ENCODE measurements at regions of chr5 and their contacts with region 1.

Region 1: GRCh38 chr5:472656-473553 is 29.9 kb downstream of the EXOC3 start:
- DNase-seq: peak; percentile 70
- H3K4me3 Mint-ChIP-seq: peak overlapping the region; percentile 79
- H3K27ac Mint-ChIP-seq: no peak overlapping the region
- H3K4me1 Mint-ChIP-seq: peaks cover 12% of the 10 kb centered on the region
- H3K27me3 Mint-ChIP-seq: peaks cover 13% of the 10 kb centered on the region
- CTCF ChIP-seq: no peak

Region 2: DNA sequence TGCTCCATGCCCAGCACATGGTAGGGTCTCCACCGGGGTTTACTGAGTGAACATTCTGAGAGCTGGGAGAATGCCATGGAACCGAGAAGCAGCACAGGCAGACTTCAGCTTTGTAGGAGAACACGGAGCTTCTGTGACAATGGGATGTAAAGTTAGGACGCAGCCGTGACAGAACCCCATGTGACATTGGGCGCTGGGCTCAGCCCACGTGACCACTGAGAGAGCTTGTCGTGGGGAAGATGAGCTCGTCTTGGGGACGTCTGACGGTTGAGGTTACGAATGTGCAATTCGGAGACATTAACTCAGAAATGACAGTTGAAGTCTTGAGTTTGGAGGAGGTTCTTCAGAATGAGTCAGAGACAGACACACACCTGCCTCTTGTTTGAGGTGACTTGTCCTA is 241.2 kb before region 1 on chr5:
- CTCF ChIA-PET with region 1: no interaction called
- POLR2A ChIA-PET with region 1: no interaction called
- intact Hi-C with region 1: no loop called
- DNase-seq: no peak
- H3K4me3 Mint-ChIP-seq: no peak overlapping the region
- H3K27ac Mint-ChIP-seq: no peak overlapping the region
- H3K4me1 Mint-ChIP-seq: no peaks in the 10 kb centered on the region
- H3K27me3 Mint-ChIP-seq: no peaks in the 10 kb centered on the region
- CTCF ChIP-seq: no peak

Region 3: GRCh38 chr5:442335-443238 is 30.3 kb before region 1 on chr5 and contains the start of gene EXOC3:
- CTCF ChIA-PET with region 1: interaction called, 11 read pairs
- POLR2A ChIA-PET with region 1: interaction called, 13 read pairs
- intact Hi-C with region 1: no loop called
- DNase-seq: peak; percentile 64
- H3K4me3 Mint-ChIP-seq: peak within 1 kb of the TSS; percentile 91
- H3K27ac Mint-ChIP-seq: peak within 1 kb of the TSS; percentile 80
- H3K4me1 Mint-ChIP-seq: peaks cover 15% of the 10 kb centered on the region
- H3K27me3 Mint-ChIP-seq: no peaks in the 10 kb centered on the region
- CTCF ChIP-seq: no peak
- total RNA-seq, gene EXOC3: 44.1 and 49.6 TPM in 2 replicates

Region 4: DNA sequence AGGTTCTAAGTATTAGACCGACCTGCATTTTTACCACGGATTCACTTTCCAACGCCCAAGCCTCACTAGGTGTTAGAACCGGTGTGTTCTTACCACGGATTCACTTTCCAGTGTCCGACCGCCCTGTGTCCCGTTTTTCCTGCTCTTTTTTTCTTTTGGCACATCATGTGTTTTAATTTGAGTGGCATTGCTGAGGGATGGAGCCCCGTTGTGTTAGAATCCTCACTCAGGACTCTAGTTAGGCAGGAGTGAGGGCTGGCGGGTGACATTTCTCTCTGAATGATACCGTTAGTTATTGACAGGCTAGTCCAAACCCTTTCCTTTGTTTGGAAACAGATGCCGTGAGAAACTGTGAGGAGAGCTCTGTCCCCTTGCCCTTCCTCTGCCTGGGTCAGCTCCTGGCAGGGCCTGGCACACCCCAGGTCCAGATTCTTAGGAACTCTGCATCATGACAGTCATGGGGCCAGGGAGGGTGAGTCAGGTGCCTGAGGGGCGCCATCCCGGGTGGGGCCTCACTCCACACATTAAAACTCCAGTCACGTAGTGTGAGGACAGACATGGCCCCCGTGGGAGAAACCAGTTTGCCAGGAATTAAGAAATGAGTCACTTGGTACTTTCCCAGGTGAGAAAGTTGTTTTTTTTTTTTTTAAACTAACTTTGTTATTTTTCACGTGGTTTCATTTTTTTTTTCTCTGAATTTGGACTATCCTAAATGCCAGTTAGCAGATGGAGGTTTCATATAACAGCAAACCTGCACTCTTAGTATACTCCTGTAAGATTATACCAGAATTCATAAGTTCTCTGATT is 14.2 kb before region 1 on chr5:
- CTCF ChIA-PET with region 1: interaction called, 3 read pairs
- POLR2A ChIA-PET with region 1: interaction called, 14 read pairs
- intact Hi-C with region 1: no loop called
- DNase-seq: peak; percentile 78
- H3K4me3 Mint-ChIP-seq: peak overlapping the region; percentile 11
- H3K27ac Mint-ChIP-seq: peak overlapping the region; percentile 65
- H3K4me1 Mint-ChIP-seq: peaks cover 26% of the 10 kb centered on the region
- H3K27me3 Mint-ChIP-seq: no peaks in the 10 kb centered on the region
- CTCF ChIP-seq: no peak

Region 5: GRCh38 chr5:515273-515836 is 42.5 kb after region 1 on chr5:
- CTCF ChIA-PET with region 1: no interaction called
- POLR2A ChIA-PET with region 1: interaction called, 16 read pairs
- intact Hi-C with region 1: no loop called
- DNase-seq: peak; percentile 61
- H3K4me3 Mint-ChIP-seq: no peak overlapping the region
- H3K27ac Mint-ChIP-seq: no peak overlapping the region
- H3K4me1 Mint-ChIP-seq: peaks cover 21% of the 10 kb centered on the region
- H3K27me3 Mint-ChIP-seq: peaks cover 40% of the 10 kb centered on the region
- CTCF ChIP-seq: no peak

Region 6: DNA sequence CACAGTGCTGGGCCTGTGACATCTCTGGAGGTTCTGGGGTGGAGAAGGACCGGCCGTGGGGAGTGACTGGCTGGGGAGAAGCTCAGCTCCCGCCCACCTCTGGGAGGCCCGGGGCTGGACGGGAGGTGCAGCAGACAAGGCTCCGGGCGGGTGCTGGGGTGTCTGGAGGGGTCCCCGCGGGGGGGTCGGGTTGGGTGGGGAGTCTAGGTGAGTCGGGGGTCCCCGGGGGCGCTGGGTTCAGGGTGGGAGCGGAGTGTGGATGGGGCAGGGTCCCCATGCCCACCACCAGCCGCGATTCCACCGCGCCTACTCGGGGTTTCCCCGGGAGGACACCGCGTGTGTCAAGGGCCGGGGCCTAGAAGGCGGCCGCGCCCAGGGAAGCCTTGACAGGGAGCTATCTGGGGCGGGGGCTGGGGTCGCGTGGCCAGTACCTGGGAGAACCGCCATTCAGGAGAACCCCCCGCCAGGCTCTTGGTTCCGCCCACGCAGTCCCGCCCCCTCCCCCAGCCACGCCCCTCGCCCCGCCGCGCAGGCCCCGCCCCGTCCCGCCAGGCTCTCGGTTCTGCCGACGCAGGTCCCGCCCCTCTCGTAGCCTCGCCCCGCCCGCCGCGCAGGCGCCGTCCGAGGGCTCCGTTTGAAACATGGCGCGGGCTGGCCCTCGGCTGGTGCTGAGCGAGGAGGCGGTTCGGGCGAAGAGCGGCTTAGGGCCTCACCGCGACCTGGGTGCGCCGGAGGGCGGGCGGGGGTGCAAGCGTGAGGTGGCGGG is 139.0 kb after region 1 on chr5 and contains the start of gene CEP72:
- CTCF ChIA-PET with region 1: interaction called, 4 read pairs
- POLR2A ChIA-PET with region 1: interaction called, 7 read pairs
- intact Hi-C with region 1: loop called (anchors 2 kb)
- DNase-seq: peak; percentile 85
- H3K4me3 Mint-ChIP-seq: peak within 1 kb of the TSS; percentile 81
- H3K27ac Mint-ChIP-seq: peak within 1 kb of the TSS; percentile 93
- H3K4me1 Mint-ChIP-seq: peaks cover 18% of the 10 kb centered on the region
- H3K27me3 Mint-ChIP-seq: no peaks in the 10 kb centered on the region
- CTCF ChIP-seq: no peak
- total RNA-seq, gene CEP72: 16.4 and 16.7 TPM in 2 replicates

Region 7: GRCh38 chr5:657570-657969 is 184.7 kb after region 1 on chr5:
- CTCF ChIA-PET with region 1: no interaction called
- POLR2A ChIA-PET with region 1: interaction called, 3 read pairs
- intact Hi-C with region 1: loop called (anchors 5 kb)
- DNase-seq: peak; percentile 84
- H3K4me3 Mint-ChIP-seq: no peak overlapping the region
- H3K27ac Mint-ChIP-seq: peak overlapping the region; percentile 69
- H3K4me1 Mint-ChIP-seq: peaks cover 9% of the 10 kb centered on the region
- H3K27me3 Mint-ChIP-seq: no peaks in the 10 kb centered on the region
- CTCF ChIP-seq: no peak

Region 8: GRCh38 chr5:912280-913091 is 439.6 kb after region 1 on chr5:
- CTCF ChIA-PET with region 1: no interaction called
- POLR2A ChIA-PET with region 1: no interaction called
- intact Hi-C with region 1: loop called (anchors 10 kb)
- DNase-seq: peak; percentile 97
- H3K4me3 Mint-ChIP-seq: peak overlapping the region; percentile 61
- H3K27ac Mint-ChIP-seq: peak overlapping the region; percentile 99
- H3K4me1 Mint-ChIP-seq: peaks cover 43% of the 10 kb centered on the region
- H3K27me3 Mint-ChIP-seq: no peaks in the 10 kb centered on the region
- CTCF ChIP-seq: peak; percentile 37

Measured in MCF 10A (cell line).